Dendritic cell treated with granulocyte-macrophage colony-stimulating factor and Interleukin-4, amounts not matched to agents 40 ng/mL and 50 ng/mL, for 4 days (primary cell): ENCODE measurements at regions of chrX and their contacts with region 1.

Region 1: DNA sequence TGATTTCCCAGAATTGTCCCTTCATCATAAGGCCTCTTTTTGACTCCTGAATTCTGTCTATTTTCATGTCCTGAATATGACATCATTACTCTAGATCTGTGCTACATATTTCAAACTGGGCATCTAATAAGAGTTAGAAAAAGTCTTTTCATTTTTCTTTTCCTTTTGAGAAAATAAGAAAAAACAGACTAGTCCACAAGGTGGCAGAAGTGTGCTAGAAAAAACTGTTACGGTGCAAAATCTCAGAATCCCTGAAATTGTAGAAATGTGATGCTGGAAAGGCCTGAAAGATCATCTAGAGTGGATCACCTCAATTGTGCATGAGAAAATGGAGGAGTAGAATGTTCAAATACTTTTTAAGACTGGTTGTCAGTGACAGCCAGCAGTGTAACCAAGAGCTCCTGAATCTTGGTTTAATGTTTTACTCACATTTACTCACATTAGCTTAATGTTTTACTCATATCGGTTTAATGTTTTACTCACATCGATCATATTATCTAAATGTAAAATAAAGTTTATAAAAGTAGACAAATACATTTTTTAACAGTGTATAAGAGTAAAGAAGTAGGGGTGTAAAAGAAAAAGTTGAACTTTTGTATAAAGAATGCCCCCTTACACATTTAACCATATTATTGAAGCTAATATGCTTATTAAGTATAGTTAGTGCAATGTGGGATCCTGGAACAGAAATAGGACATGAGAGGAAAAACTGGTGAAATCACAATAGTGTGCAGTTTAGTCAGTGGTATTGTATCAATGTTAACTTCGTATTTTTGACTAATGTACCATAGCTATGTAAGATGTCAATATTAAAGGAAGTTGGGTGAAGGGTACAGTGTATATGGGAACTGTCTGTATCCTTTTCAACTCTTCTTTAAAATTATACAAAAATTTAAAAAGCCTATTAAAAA is 15.2 kb downstream of the ASB11 start:
- H3K4me3 Mint-ChIP-seq: no peak overlapping the region
- H3K27ac Mint-ChIP-seq: no peak overlapping the region
- H3K4me1 Mint-ChIP-seq: peaks cover 33% of the 10 kb centered on the region
- H3K27me3 Mint-ChIP-seq: no peaks in the 10 kb centered on the region

Region 2: DNA sequence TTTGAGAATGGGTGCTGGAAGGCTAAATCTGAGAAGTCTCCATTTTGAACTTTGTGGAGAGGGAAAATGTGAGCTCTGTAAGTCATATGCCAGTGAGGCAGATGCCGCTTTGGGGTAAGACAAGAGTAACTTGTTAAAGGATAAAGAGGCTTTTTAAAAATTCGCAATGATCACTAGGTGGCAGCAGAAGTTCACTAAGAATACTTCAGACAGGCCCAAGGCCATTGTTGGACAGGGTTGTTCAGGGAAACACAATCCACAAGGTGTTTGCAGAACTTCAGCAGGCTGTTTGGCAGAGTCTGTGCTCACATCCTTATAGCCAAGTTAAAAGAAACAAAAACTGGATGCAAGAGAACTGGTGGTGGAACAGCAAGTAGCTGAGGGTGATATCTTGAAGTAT is 48.9 kb after region 1 on chrX:
- intact Hi-C with region 1: loop called (anchors 2 kb)
- H3K4me3 Mint-ChIP-seq: no peak overlapping the region
- H3K27ac Mint-ChIP-seq: no peak overlapping the region
- H3K4me1 Mint-ChIP-seq: peaks cover 16% of the 10 kb centered on the region
- H3K27me3 Mint-ChIP-seq: peaks cover 11% of the 10 kb centered on the region

Region 3: DNA sequence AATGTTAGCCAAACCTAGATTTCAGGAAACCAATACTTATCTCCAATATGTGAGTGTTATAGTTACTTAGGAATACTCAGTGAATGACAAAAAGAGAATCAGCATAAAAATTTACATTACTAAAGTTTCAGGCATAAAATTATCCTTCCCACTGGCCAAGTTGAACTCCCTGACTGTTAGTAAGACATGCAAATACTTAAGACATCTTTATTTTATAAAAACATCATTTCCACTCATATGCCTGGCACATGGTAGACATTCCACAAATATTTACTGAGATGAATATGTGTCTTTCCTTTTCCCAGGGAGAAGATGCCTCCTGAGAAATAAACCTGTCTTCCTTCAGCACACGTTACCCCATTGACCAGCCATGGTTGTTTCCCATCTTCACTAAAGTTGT is 76.8 kb after region 1 on chrX:
- intact Hi-C with region 1: no loop called
- H3K4me3 Mint-ChIP-seq: no peak overlapping the region
- H3K27ac Mint-ChIP-seq: no peak overlapping the region
- H3K4me1 Mint-ChIP-seq: no peaks in the 10 kb centered on the region
- H3K27me3 Mint-ChIP-seq: peaks cover 2% of the 10 kb centered on the region

Region 4: GRCh38 chrX:15564981-15565579 is 264.9 kb after region 1 on chrX:
- intact Hi-C with region 1: no loop called
- H3K4me3 Mint-ChIP-seq: no peak overlapping the region
- H3K27ac Mint-ChIP-seq: no peak overlapping the region
- H3K4me1 Mint-ChIP-seq: no peaks in the 10 kb centered on the region
- H3K27me3 Mint-ChIP-seq: no peaks in the 10 kb centered on the region